PC-3 (cell line): ENCODE measurements at regions of chr1 and their contacts with region 1.

Region 1: GRCh38 chr1:224851210-224851847 is 78.1 kb upstream of the DNAH14 start:
- DNase-seq: peak; percentile 88
- ATAC-seq: peak; percentile 85
- H3K4me3 ChIP-seq: no peak overlapping the region
- H3K27ac ChIP-seq: no peak overlapping the region
- H3K4me1 ChIP-seq: no peaks in the 10 kb centered on the region
- H3K27me3 ChIP-seq: no peaks in the 10 kb centered on the region
- CTCF ChIP-seq: peak; percentile 96

Region 2: GRCh38 chr1:224513787-224514209 is 337.5 kb before region 1 on chr1:
- CTCF ChIA-PET with region 1: interaction called, 3 read pairs
- POLR2A ChIA-PET with region 1: no interaction called
- intact Hi-C with region 1: loop called (anchors 1 kb)
- DNase-seq: peak; percentile 97
- ATAC-seq: peak; percentile 95
- H3K4me3 ChIP-seq: no peak overlapping the region
- H3K27ac ChIP-seq: no peak overlapping the region
- H3K4me1 ChIP-seq: peaks cover 25% of the 10 kb centered on the region
- H3K27me3 ChIP-seq: no peaks in the 10 kb centered on the region
- CTCF ChIP-seq: peak; percentile 98

Region 3: DNA sequence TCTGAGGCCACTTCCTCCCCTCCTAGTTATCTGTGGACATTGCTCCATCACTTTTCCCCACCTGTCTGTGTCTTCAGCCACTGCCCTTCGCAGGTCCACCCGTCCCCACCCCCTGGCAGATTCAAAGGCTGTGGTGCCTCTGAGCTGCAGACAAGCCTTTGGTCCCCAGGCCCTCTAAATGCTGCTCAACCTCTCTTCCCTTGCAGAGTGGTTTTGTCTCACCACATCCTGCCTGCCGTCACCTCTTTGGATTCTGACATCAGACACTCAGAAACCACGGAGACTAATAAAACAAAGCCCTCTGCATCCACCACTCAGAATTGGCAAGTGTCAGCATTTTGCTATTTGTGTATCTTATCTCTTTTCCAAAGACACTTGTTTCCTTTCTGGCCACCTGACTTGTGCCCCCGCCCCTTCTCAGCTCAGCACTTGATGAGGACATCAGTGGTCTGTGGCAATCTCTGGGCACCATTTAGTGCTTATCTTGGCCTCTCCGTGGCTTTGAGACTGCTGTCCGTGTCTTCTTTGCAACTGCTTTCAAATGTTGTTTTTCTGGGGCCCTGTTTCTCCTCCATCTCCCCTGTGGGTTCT is 227.5 kb before region 1 on chr1:
- CTCF ChIA-PET with region 1: no interaction called
- POLR2A ChIA-PET with region 1: no interaction called
- intact Hi-C with region 1: no loop called
- DNase-seq: peak; percentile 94
- ATAC-seq: peak; percentile 85
- H3K4me3 ChIP-seq: peak overlapping the region; percentile 5; the same call in 1 of the 2 replicates
- H3K27ac ChIP-seq: peak overlapping the region; percentile 69
- H3K4me1 ChIP-seq: peaks cover 28% of the 10 kb centered on the region
- H3K27me3 ChIP-seq: no peaks in the 10 kb centered on the region
- CTCF ChIP-seq: no peak

Region 4: GRCh38 chr1:224644553-224645154 is 206.7 kb before region 1 on chr1:
- CTCF ChIA-PET with region 1: interaction called, 3 read pairs
- POLR2A ChIA-PET with region 1: no interaction called
- intact Hi-C with region 1: loop called (anchors 1 kb)
- DNase-seq: peak; percentile 81
- ATAC-seq: peak; percentile 71
- H3K4me3 ChIP-seq: no peak overlapping the region
- H3K27ac ChIP-seq: no peak overlapping the region
- H3K4me1 ChIP-seq: peaks cover 9% of the 10 kb centered on the region
- H3K27me3 ChIP-seq: no peaks in the 10 kb centered on the region
- CTCF ChIP-seq: peak; percentile 98

Region 5: DNA sequence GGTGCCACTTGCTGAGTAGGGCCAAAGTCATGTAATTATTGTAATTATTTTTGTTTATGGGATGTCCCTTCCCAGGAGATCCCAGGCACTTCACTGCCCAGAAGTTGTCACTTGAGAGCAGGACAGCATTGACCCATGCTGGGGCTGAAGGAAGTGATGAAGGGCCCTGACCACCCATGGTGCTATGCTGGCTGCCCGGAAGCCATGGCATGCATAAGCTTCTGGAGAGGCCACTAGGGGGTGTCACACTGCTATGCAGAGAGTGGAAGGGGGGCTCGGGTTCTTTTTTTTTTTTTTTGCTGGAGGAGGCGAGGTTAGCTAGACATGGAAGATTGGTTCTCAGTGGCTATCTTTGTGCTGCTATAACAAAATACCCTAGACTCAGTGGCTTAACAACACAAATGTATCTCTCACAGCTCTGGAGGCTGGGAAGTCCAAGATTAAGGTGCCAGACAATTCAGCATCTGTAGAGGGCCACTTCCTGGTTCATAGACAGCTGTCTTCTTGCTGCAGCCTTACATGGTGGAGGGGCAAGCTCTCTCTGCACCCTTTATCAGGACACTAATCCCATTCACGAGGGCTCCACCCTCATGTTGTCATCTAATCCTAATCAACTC is 150.3 kb before region 1 on chr1:
- CTCF ChIA-PET with region 1: interaction called, 23 read pairs
- POLR2A ChIA-PET with region 1: no interaction called
- intact Hi-C with region 1: no loop called
- DNase-seq: peak; percentile 49
- ATAC-seq: peak; percentile 81
- H3K4me3 ChIP-seq: no peak overlapping the region
- H3K27ac ChIP-seq: no peak overlapping the region
- H3K4me1 ChIP-seq: no peaks in the 10 kb centered on the region
- H3K27me3 ChIP-seq: no peaks in the 10 kb centered on the region
- CTCF ChIP-seq: peak; percentile 84

Region 6: GRCh38 chr1:224894918-224895317 is 43.6 kb after region 1 on chr1:
- CTCF ChIA-PET with region 1: no interaction called
- POLR2A ChIA-PET with region 1: no interaction called
- intact Hi-C with region 1: loop called (anchors 1 kb)
- DNase-seq: peak; percentile 65
- ATAC-seq: peak; percentile 72
- H3K4me3 ChIP-seq: no peak overlapping the region
- H3K27ac ChIP-seq: no peak overlapping the region
- H3K4me1 ChIP-seq: no peaks in the 10 kb centered on the region
- H3K27me3 ChIP-seq: peaks cover 18% of the 10 kb centered on the region
- CTCF ChIP-seq: peak; percentile 68